ENCODE measurements at regions of chr12 and their contacts with region 1.

Region 1: DNA sequence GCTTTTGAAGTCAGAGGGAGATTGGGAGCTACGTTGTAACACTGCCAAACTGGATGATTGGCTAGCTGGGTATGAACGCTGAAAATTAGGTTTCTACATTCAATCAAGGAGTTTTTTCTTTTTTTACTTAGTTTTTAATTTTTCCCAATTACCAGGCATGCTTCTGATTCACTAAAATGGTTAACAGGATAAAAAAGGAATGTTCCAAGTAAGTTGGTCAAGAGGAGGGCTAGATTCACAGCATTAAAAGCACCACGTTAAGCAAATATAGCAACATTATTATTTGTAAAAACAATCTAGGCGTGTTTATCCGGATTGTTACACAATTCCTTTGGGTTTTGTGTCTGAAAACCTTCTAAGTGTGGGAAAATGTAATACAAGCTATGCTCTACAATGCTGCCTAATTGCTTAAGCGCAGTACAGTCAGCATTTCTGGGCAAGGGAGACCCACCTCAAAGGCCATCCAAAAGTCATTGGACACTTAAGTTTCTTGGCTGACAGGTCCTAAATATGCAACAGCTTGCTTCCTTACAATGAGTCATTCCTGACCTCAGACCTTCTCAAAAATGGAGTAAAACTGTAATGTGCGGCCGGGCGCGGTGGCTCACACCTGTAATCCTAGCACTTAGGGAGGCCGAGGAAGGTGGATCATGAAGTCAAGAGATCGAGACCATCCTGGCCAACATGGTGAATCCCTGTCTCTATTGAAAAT is 1.2 kb downstream of the RPLP0 start:
- DNase-seq: no peak
- H3K4me3 ChIP-seq: peak overlapping the region; percentile 81
- H3K4me3 Mint-ChIP-seq: peak overlapping the region; percentile 86
- H3K27ac Mint-ChIP-seq: peak overlapping the region; percentile 96
- H3K4me1 ChIP-seq: peaks cover 35% of the 10 kb centered on the region
- H3K4me1 Mint-ChIP-seq: peaks cover 13% of the 10 kb centered on the region
- H3K27me3 ChIP-seq: no peaks in the 10 kb centered on the region
- H3K27me3 Mint-ChIP-seq: no peaks in the 10 kb centered on the region
- CTCF ChIP-seq: no peak

Region 2: DNA sequence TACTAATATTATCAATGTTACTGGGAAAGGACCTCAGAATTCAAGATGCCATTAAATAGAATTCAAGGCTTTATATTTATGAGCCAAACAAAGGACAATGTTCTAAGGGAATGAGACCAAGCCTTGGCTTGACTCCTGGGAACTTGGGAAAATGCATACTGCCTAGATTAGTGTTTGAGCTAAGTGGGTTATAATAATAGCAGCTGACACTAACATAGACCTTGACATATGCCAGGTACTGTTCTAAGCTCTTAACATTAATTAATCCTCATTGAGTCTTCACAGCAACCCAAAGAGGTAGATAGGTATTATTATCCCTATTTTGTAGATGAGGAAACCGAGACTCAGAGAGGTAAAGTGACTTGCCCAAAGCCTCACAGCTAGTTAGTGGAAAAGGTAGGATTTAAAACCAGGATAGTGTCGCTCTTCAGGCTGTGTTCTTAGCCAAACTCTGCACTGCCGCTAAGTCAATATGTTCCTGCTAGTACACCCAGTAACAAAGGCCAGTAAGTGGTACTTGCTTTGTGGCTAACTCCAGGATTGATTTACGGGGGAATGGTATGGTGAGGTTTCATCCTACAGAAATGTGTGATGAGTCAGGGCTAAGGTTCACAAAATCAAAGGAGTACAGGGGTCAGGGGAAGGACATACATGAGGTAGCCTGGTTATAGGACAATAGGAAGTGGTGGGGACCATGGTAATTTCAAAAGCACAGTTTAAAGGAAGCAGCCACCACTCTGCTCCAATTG is 567.6 kb before region 1 on chr12:
- CTCF ChIA-PET with region 1: no interaction called
- POLR2A ChIA-PET with region 1: no interaction called
- intact Hi-C with region 1: no loop called
- DNase-seq: no peak
- H3K4me3 ChIP-seq: no peak overlapping the region
- H3K4me3 Mint-ChIP-seq: no peak overlapping the region
- H3K27ac Mint-ChIP-seq: no peak overlapping the region
- H3K4me1 ChIP-seq: no peaks in the 10 kb centered on the region
- H3K4me1 Mint-ChIP-seq: no peaks in the 10 kb centered on the region
- H3K27me3 ChIP-seq: no peaks in the 10 kb centered on the region
- H3K27me3 Mint-ChIP-seq: peaks cover 9% of the 10 kb centered on the region
- CTCF ChIP-seq: no peak

Region 3: DNA sequence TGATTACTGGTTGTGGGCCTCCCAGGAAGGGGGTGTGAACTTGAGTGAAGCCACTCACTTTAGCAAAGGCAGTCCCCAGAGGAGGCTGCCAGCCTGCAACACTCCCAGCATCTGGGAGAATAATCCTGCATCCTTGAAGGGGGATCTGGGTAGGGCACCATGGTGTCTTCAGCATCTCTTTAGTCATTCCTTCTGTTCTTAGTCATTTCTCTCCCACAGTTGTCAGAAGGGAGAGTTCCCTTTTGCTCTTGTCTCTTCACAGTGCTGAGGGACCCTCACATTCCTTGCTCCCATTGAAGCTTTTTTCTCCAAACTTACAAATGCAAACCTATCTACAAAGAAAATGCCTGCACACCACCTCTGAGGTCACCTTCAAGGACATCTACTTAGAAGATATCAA is 274.5 kb before region 1 on chr12:
- CTCF ChIA-PET with region 1: no interaction called
- POLR2A ChIA-PET with region 1: no interaction called
- intact Hi-C with region 1: no loop called
- DNase-seq: no peak
- H3K4me3 ChIP-seq: no peak overlapping the region
- H3K4me3 Mint-ChIP-seq: no peak overlapping the region
- H3K27ac Mint-ChIP-seq: no peak overlapping the region
- H3K4me1 ChIP-seq: no peaks in the 10 kb centered on the region
- H3K4me1 Mint-ChIP-seq: no peaks in the 10 kb centered on the region
- H3K27me3 ChIP-seq: no peaks in the 10 kb centered on the region
- H3K27me3 Mint-ChIP-seq: no peaks in the 10 kb centered on the region
- CTCF ChIP-seq: no peak

Region 4: GRCh38 chr12:119988782-119989668 is 210.7 kb before region 1 on chr12 and contains the start of gene BICDL1:
- CTCF ChIA-PET with region 1: no interaction called
- POLR2A ChIA-PET with region 1: interaction called, 11 read pairs
- intact Hi-C with region 1: no loop called
- DNase-seq: peak; percentile 93 to 95
- H3K4me3 ChIP-seq: peak within 1 kb of the TSS; percentile 73
- H3K4me3 Mint-ChIP-seq: peak within 1 kb of the TSS; percentile 81
- H3K27ac Mint-ChIP-seq: no peak within 1 kb of the TSS
- H3K4me1 ChIP-seq: peaks cover 8% of the 10 kb centered on the region
- H3K4me1 Mint-ChIP-seq: no peaks in the 10 kb centered on the region
- H3K27me3 ChIP-seq: no peaks in the 10 kb centered on the region
- H3K27me3 Mint-ChIP-seq: no peaks in the 10 kb centered on the region
- CTCF ChIP-seq: no peak
- total RNA-seq, gene BICDL1: 10.8 and 14.2 TPM in 2 replicates

Region 5: GRCh38 chr12:120006209-120006975 is 193.4 kb before region 1 on chr12:
- CTCF ChIA-PET with region 1: no interaction called
- POLR2A ChIA-PET with region 1: no interaction called
- intact Hi-C with region 1: no loop called
- DNase-seq: no peak
- H3K4me3 ChIP-seq: no peak overlapping the region
- H3K4me3 Mint-ChIP-seq: no peak overlapping the region
- H3K27ac Mint-ChIP-seq: no peak overlapping the region
- H3K4me1 ChIP-seq: no peaks in the 10 kb centered on the region
- H3K4me1 Mint-ChIP-seq: peaks cover 7% of the 10 kb centered on the region
- H3K27me3 ChIP-seq: no peaks in the 10 kb centered on the region
- H3K27me3 Mint-ChIP-seq: no peaks in the 10 kb centered on the region
- CTCF ChIP-seq: no peak

Region 6: DNA sequence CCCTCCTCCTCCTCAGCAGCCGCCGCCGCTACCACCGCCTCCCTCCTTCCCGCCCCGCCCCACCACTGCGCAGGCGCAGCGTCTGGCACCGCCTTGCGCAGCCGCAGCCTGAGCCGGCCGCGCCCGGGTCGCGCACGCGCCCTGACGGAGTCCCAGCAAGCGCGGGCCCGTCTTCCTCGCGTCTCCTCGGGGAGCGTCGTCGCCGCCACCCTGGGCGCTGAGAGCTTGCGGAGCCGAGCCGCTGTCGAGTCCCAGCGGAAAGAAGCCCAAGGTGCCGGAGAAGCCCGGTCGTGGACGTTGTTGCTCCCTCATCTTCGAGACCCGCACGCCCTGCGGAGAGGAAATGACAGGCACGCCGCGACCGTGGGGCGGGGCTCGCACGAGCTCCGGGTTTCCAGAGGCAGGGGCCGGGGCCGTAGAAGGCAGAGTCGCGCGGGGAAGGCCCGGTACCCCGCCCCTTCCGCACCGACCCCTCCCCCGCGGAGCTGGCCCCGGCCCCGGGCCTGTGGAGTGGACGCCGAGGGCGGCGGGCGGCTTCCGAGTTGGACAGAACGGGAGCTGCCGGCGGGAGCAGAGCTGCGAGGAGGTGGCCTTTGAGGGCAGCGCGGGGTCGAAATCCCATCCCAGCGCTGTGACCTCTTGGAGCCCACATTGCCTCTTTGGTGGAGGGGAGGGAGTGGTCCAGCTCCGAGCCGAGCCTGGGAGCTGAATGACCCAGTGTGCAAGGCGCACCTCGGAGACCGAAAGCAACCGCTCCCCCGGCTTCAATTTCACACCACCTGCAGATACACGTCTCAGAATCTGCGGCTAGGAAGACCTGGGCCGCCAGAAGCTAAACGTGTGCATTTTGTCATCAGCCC is 82.7 kb before region 1 on chr12:
- CTCF ChIA-PET with region 1: no interaction called
- POLR2A ChIA-PET with region 1: interaction called, 36 read pairs
- intact Hi-C with region 1: no loop called
- DNase-seq: peak; percentile 96 to 99
- H3K4me3 ChIP-seq: peak overlapping the region; percentile 86
- H3K4me3 Mint-ChIP-seq: peak overlapping the region; percentile 84
- H3K27ac Mint-ChIP-seq: peak overlapping the region; percentile 92
- H3K4me1 ChIP-seq: peaks cover 26% of the 10 kb centered on the region
- H3K4me1 Mint-ChIP-seq: peaks cover 24% of the 10 kb centered on the region
- H3K27me3 ChIP-seq: no peaks in the 10 kb centered on the region
- H3K27me3 Mint-ChIP-seq: no peaks in the 10 kb centered on the region
- CTCF ChIP-seq: no peak

Region 7: GRCh38 chr12:120228291-120229070 is 28.7 kb after region 1 on chr12:
- CTCF ChIA-PET with region 1: interaction called, 37 read pairs
- POLR2A ChIA-PET with region 1: interaction called, 187 read pairs
- intact Hi-C with region 1: loop called (anchors 1 kb)
- DNase-seq: peak; percentile 97 to 99
- H3K4me3 ChIP-seq: peak overlapping the region; percentile 34
- H3K4me3 Mint-ChIP-seq: peak overlapping the region; percentile 67
- H3K27ac Mint-ChIP-seq: peak overlapping the region; percentile 84
- H3K4me1 ChIP-seq: peaks cover 78% of the 10 kb centered on the region
- H3K4me1 Mint-ChIP-seq: peaks cover 43% of the 10 kb centered on the region
- H3K27me3 ChIP-seq: no peaks in the 10 kb centered on the region
- H3K27me3 Mint-ChIP-seq: no peaks in the 10 kb centered on the region
- CTCF ChIP-seq: peak; percentile 84 to 94

Region 8: DNA sequence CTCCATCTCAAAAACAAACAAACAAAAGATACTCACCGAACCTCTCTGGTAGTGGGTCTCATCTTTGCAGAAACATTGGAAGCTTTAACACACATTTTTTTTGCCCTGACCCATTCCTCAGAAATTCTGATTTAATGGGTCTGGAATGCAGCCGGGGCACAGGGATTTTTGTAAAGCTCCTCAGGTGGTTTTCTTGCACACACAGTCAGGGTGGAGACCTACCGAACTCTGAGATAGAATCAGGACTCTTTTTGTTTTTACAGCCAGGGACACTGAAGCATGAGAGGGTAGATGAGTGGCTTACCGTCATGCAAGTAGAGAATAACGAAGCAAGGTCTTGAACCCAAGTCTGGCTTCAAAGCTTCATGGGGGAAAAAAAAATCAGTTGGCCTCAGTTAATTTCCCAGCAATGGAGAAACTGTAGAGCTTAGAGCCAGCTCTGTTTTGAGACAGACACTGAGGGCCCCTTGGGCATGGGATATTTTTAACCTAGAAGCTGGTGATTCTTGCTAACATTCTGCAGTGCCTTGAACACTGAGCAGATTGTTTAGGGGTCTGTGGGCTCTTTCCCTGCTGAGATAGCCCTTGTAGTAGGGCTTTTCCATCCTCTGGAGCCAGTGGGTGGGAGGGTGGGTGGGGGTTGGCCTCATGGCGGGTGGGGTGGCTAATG is 87.2 kb after region 1 on chr12:
- CTCF ChIA-PET with region 1: interaction called, 4 read pairs
- POLR2A ChIA-PET with region 1: interaction called, 70 read pairs
- intact Hi-C with region 1: no loop called
- DNase-seq: peak in 1 of 2 experiments; percentile 53
- H3K4me3 ChIP-seq: no peak overlapping the region
- H3K4me3 Mint-ChIP-seq: peak overlapping the region; percentile 35
- H3K27ac Mint-ChIP-seq: peak overlapping the region; percentile 92
- H3K4me1 ChIP-seq: peaks cover 39% of the 10 kb centered on the region
- H3K4me1 Mint-ChIP-seq: peaks cover 45% of the 10 kb centered on the region
- H3K27me3 ChIP-seq: no peaks in the 10 kb centered on the region
- H3K27me3 Mint-ChIP-seq: no peaks in the 10 kb centered on the region
- CTCF ChIP-seq: no peak

Region 9: GRCh38 chr12:120317224-120318105 is 117.7 kb after region 1 on chr12:
- CTCF ChIA-PET with region 1: no interaction called
- POLR2A ChIA-PET with region 1: interaction called, 18 read pairs
- intact Hi-C with region 1: no loop called
- DNase-seq: peak; percentile 100
- H3K4me3 ChIP-seq: peak overlapping the region; percentile 49
- H3K4me3 Mint-ChIP-seq: peak overlapping the region; percentile 95
- H3K27ac Mint-ChIP-seq: peak overlapping the region; percentile 99
- H3K4me1 ChIP-seq: peaks cover 22% of the 10 kb centered on the region
- H3K4me1 Mint-ChIP-seq: peaks cover 13% of the 10 kb centered on the region
- H3K27me3 ChIP-seq: no peaks in the 10 kb centered on the region
- H3K27me3 Mint-ChIP-seq: no peaks in the 10 kb centered on the region
- CTCF ChIP-seq: peak; percentile 52 to 77

Measured in Caco-2 (cell line).